H1 (cell line): ENCODE measurements at regions of chr19 and their contacts with region 1.

Region 1: GRCh38 chr19:20039203-20039723 is at the start of gene ZNF682:
- DNase-seq: peak; percentile 93 to 98
- H3K4me3 ChIP-seq: peak within 1 kb of the TSS; percentile 76 to 95 (median 89)
- H3K27ac ChIP-seq: peak within 1 kb of the TSS; percentile 95
- H3K4me1 ChIP-seq: peaks cover 2 to 7% (median 6%) of the 10 kb centered on the region in 4 experiments; a peak in 3 of 7 replicates
- H3K27me3 ChIP-seq: no peaks in the 10 kb centered on the region
- CTCF ChIP-seq: no peak; a peak in 1 of 4 replicates
- EP300 ChIP-seq: 0 out of 3 replicates have a peak, but pooled peaks of 1 of the 2 experiments have one; percentile 54
- POLR2A ChIP-seq: peak; percentile 75 to 97
- RAD21 ChIP-seq: no peak
- total RNA-seq, gene ZNF682: 21.7 and 27.5 TPM in 2 replicates

Region 2: DNA sequence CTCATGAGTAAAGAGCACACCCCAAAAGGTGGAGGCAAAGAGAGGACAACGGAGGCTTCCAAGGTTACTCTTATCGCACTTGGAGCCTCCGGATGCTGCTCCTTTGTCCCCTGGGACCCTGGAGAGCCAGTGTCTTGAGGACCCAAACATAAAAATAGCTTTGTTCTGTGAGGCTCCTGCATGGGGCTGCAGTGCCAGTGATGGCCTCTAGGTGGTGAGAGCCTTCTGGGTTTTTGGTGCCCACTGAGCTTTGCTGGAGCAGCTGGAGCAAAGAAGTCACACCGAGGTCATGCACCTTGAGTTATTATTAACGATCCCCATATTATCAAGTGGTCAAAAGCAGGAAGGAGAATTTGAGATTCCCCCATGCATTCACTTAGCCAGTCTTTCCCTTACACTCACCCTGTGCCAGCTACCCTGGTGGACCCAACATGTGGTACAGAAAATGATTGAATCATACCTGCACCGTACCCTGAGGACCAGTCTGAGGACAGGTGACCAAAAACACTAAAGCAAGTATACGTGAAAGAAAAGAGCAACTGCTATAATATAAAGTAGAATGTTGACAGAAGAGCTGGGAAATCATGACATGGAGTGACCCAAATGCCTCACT is 41.5 kb before region 1 on chr19:
- CTCF ChIA-PET with region 1: interaction called, 10 read pairs
- POLR2A ChIA-PET with region 1: interaction called, 6 read pairs
- DNase-seq: peak; percentile 47 to 90
- H3K4me3 ChIP-seq: no peak overlapping the region
- H3K27ac ChIP-seq: no peak overlapping the region
- H3K4me1 ChIP-seq: no peaks in the 10 kb centered on the region
- H3K27me3 ChIP-seq: no peaks in the 10 kb centered on the region
- CTCF ChIP-seq: peak; percentile 72 to 94 (median 90)
- EP300 ChIP-seq: no peak
- POLR2A ChIP-seq: no peak
- RAD21 ChIP-seq: peak; percentile 87 to 88

Region 3: DNA sequence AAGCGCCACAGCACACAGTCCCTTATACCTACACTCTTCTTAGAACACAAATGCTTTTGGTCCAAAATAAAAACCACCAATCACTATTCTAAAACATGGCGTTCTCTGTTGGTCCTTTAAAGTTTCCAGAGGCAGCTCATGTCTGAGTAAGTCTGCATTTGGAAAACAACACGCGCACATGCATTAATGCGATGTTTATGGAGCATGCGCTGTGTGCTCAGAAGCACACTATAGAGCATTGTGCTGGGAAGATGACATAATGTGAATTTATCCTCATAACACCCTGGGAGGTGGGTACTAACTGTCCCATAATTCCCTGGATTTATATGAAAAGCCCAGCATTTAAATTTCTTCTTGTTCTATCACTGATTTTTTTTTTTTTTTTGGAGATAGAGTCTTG is 10.7 kb before region 1 on chr19:
- CTCF ChIA-PET with region 1: no interaction called
- POLR2A ChIA-PET with region 1: interaction called, 23 read pairs
- DNase-seq: no peak
- H3K4me3 ChIP-seq: no peak overlapping the region
- H3K27ac ChIP-seq: no peak overlapping the region
- H3K4me1 ChIP-seq: no peaks in the 10 kb centered on the region
- H3K27me3 ChIP-seq: no peaks in the 10 kb centered on the region
- CTCF ChIP-seq: no peak
- EP300 ChIP-seq: no peak
- POLR2A ChIP-seq: no peak
- RAD21 ChIP-seq: no peak

Region 4: GRCh38 chr19:20051841-20052768 is 12.8 kb after region 1 on chr19:
- CTCF ChIA-PET with region 1: interaction called, 3 read pairs
- POLR2A ChIA-PET with region 1: interaction called, 46 read pairs
- DNase-seq: peak; percentile 91 to 100
- H3K4me3 ChIP-seq: peak overlapping the region; percentile 76 to 87 (median 82)
- H3K27ac ChIP-seq: peak overlapping the region; percentile 87
- H3K4me1 ChIP-seq: peaks cover 0 to 3% (median 0%) of the 10 kb centered on the region in 4 experiments; a peak in 1 of 7 replicates
- H3K27me3 ChIP-seq: no peaks in the 10 kb centered on the region
- CTCF ChIP-seq: peak; percentile 8 to 19 (median 19); a peak in 2 of 4 replicates
- EP300 ChIP-seq: no peak
- POLR2A ChIP-seq: peak; percentile 66 to 78
- RAD21 ChIP-seq: peak; percentile 1 to 2; a peak in 2 of 4 replicates

Region 5: GRCh38 chr19:20067943-20068342 is 28.7 kb after region 1 on chr19:
- CTCF ChIA-PET with region 1: no interaction called
- POLR2A ChIA-PET with region 1: interaction called, 23 read pairs
- DNase-seq: no peak
- H3K4me3 ChIP-seq: peak overlapping the region in 1 of 4 experiments; percentile 11; a peak in 1 of 8 replicates
- H3K27ac ChIP-seq: no peak overlapping the region
- H3K4me1 ChIP-seq: peaks cover 2 to 20% (median 12%) of the 10 kb centered on the region in 4 experiments
- H3K27me3 ChIP-seq: no peaks in the 10 kb centered on the region
- CTCF ChIP-seq: no peak
- EP300 ChIP-seq: no peak
- POLR2A ChIP-seq: no peak
- RAD21 ChIP-seq: no peak

Region 6: DNA sequence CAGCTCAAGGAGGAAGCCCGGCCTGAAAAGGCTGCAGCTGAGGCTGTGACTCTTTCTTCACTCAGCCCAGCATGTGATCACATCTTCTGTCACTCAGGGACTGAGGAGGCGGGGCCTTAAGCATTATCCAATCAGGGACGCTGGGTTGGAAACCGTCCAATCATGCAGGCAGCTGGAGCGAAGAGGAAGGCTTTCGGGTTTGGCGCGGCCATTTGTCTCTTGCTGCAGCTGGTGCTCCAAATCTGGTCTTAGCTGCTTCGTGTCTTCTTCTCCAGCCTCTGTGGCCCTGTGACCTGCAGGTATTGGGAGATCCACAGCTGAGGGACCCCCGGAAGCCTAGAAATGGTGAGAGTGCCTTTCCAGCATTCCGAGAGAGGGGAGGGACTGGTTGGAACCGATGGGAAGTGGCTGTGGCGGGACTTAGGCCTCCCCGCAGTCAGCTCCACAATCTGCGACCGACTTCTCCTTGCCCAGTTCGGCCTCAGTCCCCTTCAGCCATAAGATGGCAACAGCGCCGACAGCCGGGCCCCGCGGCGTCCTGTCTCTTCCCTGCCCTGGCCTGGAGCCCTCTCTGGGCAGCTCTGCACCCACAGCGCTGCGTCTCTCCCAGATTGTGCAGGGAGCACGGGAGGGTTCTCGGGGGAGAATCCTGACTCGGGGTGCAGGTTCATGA is 38.7 kb after region 1 on chr19 and contains the start of gene ZNF90:
- CTCF ChIA-PET with region 1: interaction called, 4 read pairs
- POLR2A ChIA-PET with region 1: interaction called, 37 read pairs
- DNase-seq: peak; percentile 84 to 96
- H3K4me3 ChIP-seq: peak within 1 kb of the TSS; percentile 89 to 99 (median 96)
- H3K27ac ChIP-seq: peak within 1 kb of the TSS; percentile 93
- H3K4me1 ChIP-seq: peaks cover 9 to 23% (median 18%) of the 10 kb centered on the region in 4 experiments; a peak in 6 of 7 replicates
- H3K27me3 ChIP-seq: no peaks in the 10 kb centered on the region
- CTCF ChIP-seq: peak in 1 of 3 experiments; percentile 6; a peak in 1 of 4 replicates
- EP300 ChIP-seq: no peak
- POLR2A ChIP-seq: peak; percentile 79 to 88
- RAD21 ChIP-seq: peak in 1 of 2 experiments; percentile 8; a peak in 1 of 4 replicates
- total RNA-seq, gene ZNF90: 105 and 114 TPM in 2 replicates